Activated CD4-positive, alpha-beta memory T cell treated with anti-CD3 and anti-CD28 coated beads for 36 hours (primary cell): ENCODE measurements at regions of chr19 and their contacts with region 1.

Region 1: GRCh38 chr19:13748169-13748828 is 16.0 kb upstream of the MRI1 start:
- DNase-seq: peak; percentile 49
- H3K4me3 Mint-ChIP-seq: peak overlapping the region; percentile 92
- H3K27ac Mint-ChIP-seq: peak overlapping the region; percentile 82
- H3K4me1 Mint-ChIP-seq: peaks cover 28% of the 10 kb centered on the region
- H3K27me3 Mint-ChIP-seq: no peaks in the 10 kb centered on the region

Region 2: GRCh38 chr19:13731147-13731964 is 16.9 kb before region 1 on chr19:
- CTCF ChIA-PET with region 1: interaction called, 4 read pairs
- POLR2A ChIA-PET with region 1: interaction called, 13 read pairs
- intact Hi-C with region 1: loop called (anchors 1 kb)
- DNase-seq: peak; percentile 96
- H3K4me3 Mint-ChIP-seq: peak overlapping the region; percentile 79
- H3K27ac Mint-ChIP-seq: peak overlapping the region; percentile 96
- H3K4me1 Mint-ChIP-seq: peaks cover 22% of the 10 kb centered on the region
- H3K27me3 Mint-ChIP-seq: no peaks in the 10 kb centered on the region